MCF 10A (cell line): ENCODE measurements at regions of chr5 and their contacts with region 1.

Region 1: GRCh38 chr5:136080483-136081216 is 51.9 kb downstream of the TGFBI start:
- DNase-seq: no peak
- H3K4me3 Mint-ChIP-seq: no peak overlapping the region
- H3K27ac Mint-ChIP-seq: no peak overlapping the region
- H3K4me1 Mint-ChIP-seq: no peaks in the 10 kb centered on the region
- H3K27me3 Mint-ChIP-seq: no peaks in the 10 kb centered on the region
- CTCF ChIP-seq: no peak

Region 2: GRCh38 chr5:135493406-135494180 is 587.1 kb before region 1 on chr5:
- CTCF ChIA-PET with region 1: no interaction called
- POLR2A ChIA-PET with region 1: no interaction called
- intact Hi-C with region 1: no loop called
- DNase-seq: peak; percentile 98
- H3K4me3 Mint-ChIP-seq: peak overlapping the region; percentile 10
- H3K27ac Mint-ChIP-seq: peak overlapping the region; percentile 94
- H3K4me1 Mint-ChIP-seq: peaks cover 62% of the 10 kb centered on the region
- H3K27me3 Mint-ChIP-seq: no peaks in the 10 kb centered on the region
- CTCF ChIP-seq: no peak

Region 3: GRCh38 chr5:135880278-135880677 is 200.4 kb before region 1 on chr5:
- CTCF ChIA-PET with region 1: interaction called, 24 read pairs
- POLR2A ChIA-PET with region 1: interaction called, 3 read pairs
- intact Hi-C with region 1: no loop called
- DNase-seq: peak; percentile 45
- H3K4me3 Mint-ChIP-seq: no peak overlapping the region
- H3K27ac Mint-ChIP-seq: no peak overlapping the region
- H3K4me1 Mint-ChIP-seq: peaks cover 10% of the 10 kb centered on the region
- H3K27me3 Mint-ChIP-seq: peaks cover 32% of the 10 kb centered on the region
- CTCF ChIP-seq: peak; percentile 10

Region 4: DNA sequence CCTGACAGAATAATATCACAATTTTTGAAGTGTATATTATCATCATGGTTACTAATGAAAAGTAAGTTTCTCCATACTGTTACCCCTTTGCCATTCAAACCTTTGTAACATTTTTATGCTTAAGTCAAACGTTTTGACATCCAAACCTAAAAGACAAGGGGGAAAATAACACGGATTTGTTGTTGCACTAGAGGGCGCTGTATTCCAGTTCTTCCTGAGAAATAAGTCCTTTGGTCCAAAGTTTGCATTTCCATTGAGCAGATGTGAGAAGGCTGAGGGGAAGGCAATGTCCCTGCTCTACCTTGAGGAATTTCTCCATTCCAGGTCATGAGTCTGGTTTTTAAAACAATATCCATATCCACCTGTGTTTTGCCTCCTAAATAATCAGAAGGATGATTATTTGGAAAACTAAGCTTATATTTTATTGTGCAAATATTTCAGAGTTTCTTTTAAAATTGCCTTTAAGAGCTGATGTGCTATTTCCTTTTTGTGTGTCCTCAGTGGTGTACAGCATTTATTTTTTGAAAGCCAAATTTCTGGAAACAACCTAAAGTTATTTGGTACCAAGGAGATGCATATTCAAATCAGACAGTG is 135.6 kb before region 1 on chr5:
- CTCF ChIA-PET with region 1: interaction called, 75 read pairs
- POLR2A ChIA-PET with region 1: no interaction called
- intact Hi-C with region 1: loop called (anchors 1 kb)
- DNase-seq: peak; percentile 94
- H3K4me3 Mint-ChIP-seq: no peak overlapping the region
- H3K27ac Mint-ChIP-seq: no peak overlapping the region
- H3K4me1 Mint-ChIP-seq: no peaks in the 10 kb centered on the region
- H3K27me3 Mint-ChIP-seq: no peaks in the 10 kb centered on the region
- CTCF ChIP-seq: peak; percentile 80

Region 5: GRCh38 chr5:136062366-136063274 is 18.0 kb before region 1 on chr5:
- CTCF ChIA-PET with region 1: interaction called, 44 read pairs
- POLR2A ChIA-PET with region 1: interaction called, 5 read pairs
- intact Hi-C with region 1: no loop called
- DNase-seq: peak; percentile 79
- H3K4me3 Mint-ChIP-seq: no peak overlapping the region
- H3K27ac Mint-ChIP-seq: no peak overlapping the region
- H3K4me1 Mint-ChIP-seq: peaks cover 27% of the 10 kb centered on the region
- H3K27me3 Mint-ChIP-seq: no peaks in the 10 kb centered on the region
- CTCF ChIP-seq: peak; percentile 80

Region 6: DNA sequence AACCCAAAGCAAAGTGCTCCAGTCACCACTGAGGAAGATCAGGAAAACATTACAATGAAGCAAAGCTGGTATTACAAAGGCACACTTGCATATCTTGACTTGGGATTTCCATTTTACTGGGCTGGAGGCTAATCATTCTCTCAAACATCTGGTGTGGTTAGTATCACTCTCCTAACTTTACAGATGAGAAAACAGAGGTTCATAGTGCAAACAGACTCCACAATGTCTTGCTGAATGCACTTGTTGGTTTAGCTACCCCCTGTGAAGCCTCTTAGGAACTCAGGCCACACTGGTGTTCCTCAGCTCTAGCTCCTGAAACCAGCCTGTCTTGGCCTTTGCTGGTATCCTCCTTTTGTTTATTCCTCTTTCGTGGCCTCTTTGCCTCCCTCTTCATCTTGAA is 22.5 kb after region 1 on chr5:
- CTCF ChIA-PET with region 1: interaction called, 31 read pairs
- POLR2A ChIA-PET with region 1: interaction called, 3 read pairs
- intact Hi-C with region 1: no loop called
- DNase-seq: no peak
- H3K4me3 Mint-ChIP-seq: no peak overlapping the region
- H3K27ac Mint-ChIP-seq: no peak overlapping the region
- H3K4me1 Mint-ChIP-seq: peaks cover 10% of the 10 kb centered on the region
- H3K27me3 Mint-ChIP-seq: no peaks in the 10 kb centered on the region
- CTCF ChIP-seq: no peak

Region 7: GRCh38 chr5:136123236-136123768 is 42.7 kb after region 1 on chr5:
- CTCF ChIA-PET with region 1: interaction called, 11 read pairs
- POLR2A ChIA-PET with region 1: interaction called, 3 read pairs
- intact Hi-C with region 1: no loop called
- DNase-seq: peak; percentile 76
- H3K4me3 Mint-ChIP-seq: no peak overlapping the region
- H3K27ac Mint-ChIP-seq: no peak overlapping the region
- H3K4me1 Mint-ChIP-seq: peaks cover 15% of the 10 kb centered on the region
- H3K27me3 Mint-ChIP-seq: no peaks in the 10 kb centered on the region
- CTCF ChIP-seq: no peak

Region 8: DNA sequence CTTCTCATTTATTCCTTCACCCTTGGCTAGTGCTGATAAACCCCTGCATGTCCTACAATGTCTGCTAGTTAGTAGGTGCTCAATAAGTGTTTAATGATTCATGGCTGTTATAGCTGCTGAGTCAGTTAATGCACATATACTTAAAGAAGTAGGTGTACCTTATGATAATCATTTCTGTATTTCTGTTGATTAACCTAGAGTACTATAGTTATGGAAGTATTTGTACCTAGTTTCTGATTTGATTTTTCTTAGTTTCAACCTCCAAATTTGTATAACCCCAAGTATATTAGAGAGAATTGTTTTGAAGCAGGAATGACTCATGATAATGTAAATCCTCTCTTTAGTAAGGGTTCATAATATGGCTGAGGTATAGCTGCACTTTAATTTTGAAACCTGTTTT is 60.9 kb after region 1 on chr5:
- CTCF ChIA-PET with region 1: interaction called, 10 read pairs
- POLR2A ChIA-PET with region 1: interaction called, 3 read pairs
- intact Hi-C with region 1: no loop called
- DNase-seq: no peak
- H3K4me3 Mint-ChIP-seq: no peak overlapping the region
- H3K27ac Mint-ChIP-seq: no peak overlapping the region
- H3K4me1 Mint-ChIP-seq: peaks cover 26% of the 10 kb centered on the region
- H3K27me3 Mint-ChIP-seq: no peaks in the 10 kb centered on the region
- CTCF ChIP-seq: no peak

Region 9: DNA sequence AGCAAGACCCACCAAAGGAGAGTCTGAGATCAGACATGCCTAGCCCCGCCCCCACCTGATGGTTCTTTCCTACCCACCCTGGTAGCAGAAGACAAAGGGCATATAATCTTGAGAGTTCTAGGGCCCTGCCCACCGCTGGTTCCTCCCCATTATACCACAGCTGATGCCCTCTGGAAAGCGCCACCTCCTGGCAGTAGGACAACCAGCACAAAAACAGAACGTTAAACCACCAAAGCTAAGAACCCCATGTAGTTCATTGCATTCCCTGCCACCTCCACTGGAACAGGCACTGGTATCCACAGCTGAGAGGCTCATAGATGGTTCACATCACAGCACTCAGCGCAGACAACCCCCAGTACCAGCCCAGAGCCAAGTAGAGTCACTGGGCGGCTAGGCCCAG is 365.9 kb after region 1 on chr5:
- CTCF ChIA-PET with region 1: no interaction called
- POLR2A ChIA-PET with region 1: no interaction called
- intact Hi-C with region 1: no loop called
- DNase-seq: no peak
- H3K4me3 Mint-ChIP-seq: no peak overlapping the region
- H3K27ac Mint-ChIP-seq: no peak overlapping the region
- H3K4me1 Mint-ChIP-seq: no peaks in the 10 kb centered on the region
- H3K27me3 Mint-ChIP-seq: peaks cover 29% of the 10 kb centered on the region
- CTCF ChIP-seq: no peak